ENCODE measurements at regions of chr19 and their contacts with region 1.

Region 1: DNA sequence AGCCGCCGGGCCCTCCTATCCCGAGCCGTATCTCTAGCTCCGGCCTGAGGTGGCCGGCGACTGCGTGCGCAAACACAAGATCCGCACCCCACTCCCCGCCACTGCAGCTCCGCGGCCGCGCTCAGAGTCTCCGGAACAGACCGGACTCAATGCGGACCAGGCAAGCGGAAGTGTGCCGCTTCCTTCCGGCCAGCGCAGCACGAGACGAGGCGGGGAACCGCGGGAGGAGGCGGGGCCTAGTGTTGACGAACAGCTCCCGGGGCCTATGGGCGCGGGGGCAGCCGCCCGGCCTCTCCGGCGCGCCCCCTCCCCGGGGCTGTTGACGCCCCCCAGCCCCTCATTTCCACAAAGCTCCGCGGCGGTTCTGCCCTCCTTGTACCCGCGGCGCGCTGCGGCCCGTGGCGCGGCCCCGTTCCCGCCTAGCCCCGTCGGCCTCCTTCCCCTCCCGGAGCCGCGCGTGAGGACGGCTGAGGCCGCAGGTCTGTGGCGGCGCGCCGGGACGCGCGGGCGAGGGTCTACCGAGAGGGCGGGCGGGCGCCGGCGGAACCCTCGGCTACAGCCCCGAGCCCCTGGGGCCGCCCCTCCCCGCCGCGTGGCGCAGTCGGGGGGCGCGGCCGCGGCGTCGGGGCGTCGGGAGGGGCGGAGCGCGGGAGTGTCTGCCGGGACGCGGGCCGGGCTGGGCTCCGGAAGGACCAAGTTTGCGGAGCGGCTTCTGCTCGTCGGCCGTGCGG is at the start of gene DPY19L3:
- DNase-seq: peak; percentile 94 to 97
- H3K4me3 ChIP-seq: peak within 1 kb of the TSS; percentile 93 to 97
- H3K27ac ChIP-seq: peak within 1 kb of the TSS; percentile 100
- H3K4me1 ChIP-seq: peaks cover 0 to 20% (median 12%) of the 10 kb centered on the region in 4 donors
- H3K27me3 ChIP-seq: no peaks in the 10 kb centered on the region
- CTCF ChIP-seq: peak in 1 of 2 experiments; percentile 2

Region 2: GRCh38 chr19:32166238-32166637 is 239.4 kb before region 1 on chr19:
- intact Hi-C with region 1: no loop called
- DNase-seq: no peak
- H3K4me3 ChIP-seq: no peak overlapping the region
- H3K27ac ChIP-seq: no peak overlapping the region
- H3K4me1 ChIP-seq: no peaks in the 10 kb centered on the region
- H3K27me3 ChIP-seq: peaks cover 0 to 9% of the 10 kb centered on the region in 2 donors
- CTCF ChIP-seq: no peak

Region 3: DNA sequence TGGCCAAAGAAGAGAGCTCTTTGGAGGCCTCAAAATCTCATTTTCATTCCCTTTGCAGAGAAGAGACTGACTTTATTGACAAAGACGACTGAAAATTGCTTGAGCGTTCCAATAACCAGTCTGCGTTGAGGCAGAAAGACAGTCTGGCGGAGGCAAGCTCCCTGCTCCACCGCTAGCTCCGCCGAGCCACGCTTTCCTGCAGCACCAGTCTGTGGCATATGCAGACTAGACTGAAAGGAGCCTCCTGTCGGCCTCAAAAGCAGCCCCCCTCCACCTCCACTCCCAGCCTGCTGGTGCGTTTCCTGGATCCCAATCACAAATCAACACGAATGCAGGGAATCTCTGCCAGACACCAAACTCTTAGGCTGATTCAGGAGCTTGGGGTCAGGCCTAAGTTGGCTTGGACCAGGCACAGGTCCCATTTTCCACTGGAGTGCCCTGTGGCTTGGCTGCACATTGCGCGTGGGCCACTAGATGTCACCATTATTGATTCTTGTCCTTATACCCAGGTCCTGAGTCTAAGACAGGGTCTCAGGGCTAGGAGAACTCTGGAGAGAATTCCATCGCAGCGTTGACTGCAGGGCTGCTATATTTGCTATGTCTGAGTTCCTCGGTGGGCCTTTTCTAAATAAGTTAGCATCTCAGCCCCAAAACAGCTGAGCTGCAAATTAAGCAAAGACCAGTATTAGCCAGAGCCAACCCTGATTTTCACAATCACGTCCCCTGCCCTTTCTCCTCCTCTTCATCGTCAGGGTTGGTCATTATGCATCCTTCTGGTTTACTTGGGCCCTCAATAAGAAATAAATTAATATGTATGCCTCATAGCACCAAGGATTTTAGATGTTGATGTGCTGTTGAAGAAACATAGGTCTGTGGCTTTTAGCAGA is 65.4 kb before region 1 on chr19:
- intact Hi-C with region 1: loop called (anchors 5 kb)
- DNase-seq: peak; percentile 69 to 86
- H3K4me3 ChIP-seq: no peak overlapping the region
- H3K27ac ChIP-seq: peak overlapping the region; percentile 5 to 37
- H3K4me1 ChIP-seq: peaks cover 0 to 21% (median 0%) of the 10 kb centered on the region in 4 donors
- H3K27me3 ChIP-seq: no peaks in the 10 kb centered on the region
- CTCF ChIP-seq: peak; percentile 63 to 77

Region 4: DNA sequence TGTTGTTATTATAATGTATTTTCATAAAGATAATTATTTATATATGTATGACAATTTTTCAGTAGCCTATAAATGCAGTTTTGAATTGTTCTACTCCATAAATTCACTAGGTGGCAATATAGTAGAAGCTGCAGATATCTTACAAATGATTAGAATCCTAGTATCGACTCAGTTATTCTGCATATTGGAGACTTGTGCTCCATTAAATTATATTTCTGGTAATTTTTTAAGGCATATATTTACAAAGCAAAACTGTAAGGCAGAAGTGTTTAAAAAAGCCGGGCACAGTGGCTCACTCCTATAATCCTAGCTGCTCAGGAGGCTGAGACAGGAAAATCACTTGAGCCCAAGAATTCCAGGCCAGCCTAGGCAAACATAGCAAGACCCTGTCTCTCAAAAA is 58.7 kb after region 1 on chr19:
- intact Hi-C with region 1: no loop called
- DNase-seq: no peak
- H3K4me3 ChIP-seq: no peak overlapping the region
- H3K27ac ChIP-seq: no peak overlapping the region
- H3K4me1 ChIP-seq: no peaks in the 10 kb centered on the region
- H3K27me3 ChIP-seq: no peaks in the 10 kb centered on the region
- CTCF ChIP-seq: no peak

Region 5: DNA sequence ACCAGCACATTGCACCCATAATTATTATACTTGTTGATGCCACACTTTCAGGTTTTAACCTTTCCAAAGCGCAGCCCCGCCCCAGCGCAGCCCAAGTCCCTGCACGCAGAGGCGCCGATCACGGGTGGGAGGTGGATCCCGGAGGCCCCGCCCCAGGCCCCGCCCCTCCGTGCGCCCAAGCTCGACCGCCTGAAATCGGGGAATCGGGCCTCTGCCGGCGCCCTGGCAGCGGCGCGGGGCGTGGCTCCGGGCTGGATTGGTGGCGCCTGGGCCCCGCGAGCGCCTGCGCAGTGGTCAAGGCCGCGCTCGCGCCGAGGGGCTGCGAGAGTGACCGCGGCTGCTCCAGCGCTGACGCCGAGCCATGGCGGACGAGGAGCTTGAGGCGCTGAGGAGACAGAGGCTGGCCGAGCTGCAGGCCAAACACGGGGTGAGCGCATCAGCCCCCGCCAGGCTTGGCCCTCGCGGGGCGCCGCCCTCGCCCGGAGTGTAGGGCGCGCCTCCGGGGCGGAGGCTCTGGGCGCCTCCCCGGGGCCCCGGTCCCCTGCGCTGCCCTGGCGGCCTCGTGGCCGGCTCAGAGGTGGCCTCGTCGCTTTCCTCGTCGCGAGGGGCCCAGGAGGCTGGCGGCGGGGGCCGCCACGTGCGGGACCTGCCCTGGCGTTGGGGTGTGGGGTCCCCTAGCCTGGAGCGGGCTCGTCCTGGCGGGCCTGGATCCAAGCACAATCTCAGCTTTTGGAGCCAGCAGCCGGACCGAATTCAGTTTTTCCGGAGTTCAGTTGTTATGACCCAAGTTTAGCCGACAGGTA is 175.5 kb after region 1 on chr19 and contains the start of gene PDCD5:
- intact Hi-C with region 1: loop called (anchors 10 kb)
- DNase-seq: peak; percentile 95 to 98
- H3K4me3 ChIP-seq: peak within 1 kb of the TSS; percentile 96 to 100
- H3K27ac ChIP-seq: peak within 1 kb of the TSS; percentile 90 to 91
- H3K4me1 ChIP-seq: peaks cover 0 to 13% (median 9%) of the 10 kb centered on the region in 4 donors
- H3K27me3 ChIP-seq: no peaks in the 10 kb centered on the region
- CTCF ChIP-seq: no peak

Region 6: DNA sequence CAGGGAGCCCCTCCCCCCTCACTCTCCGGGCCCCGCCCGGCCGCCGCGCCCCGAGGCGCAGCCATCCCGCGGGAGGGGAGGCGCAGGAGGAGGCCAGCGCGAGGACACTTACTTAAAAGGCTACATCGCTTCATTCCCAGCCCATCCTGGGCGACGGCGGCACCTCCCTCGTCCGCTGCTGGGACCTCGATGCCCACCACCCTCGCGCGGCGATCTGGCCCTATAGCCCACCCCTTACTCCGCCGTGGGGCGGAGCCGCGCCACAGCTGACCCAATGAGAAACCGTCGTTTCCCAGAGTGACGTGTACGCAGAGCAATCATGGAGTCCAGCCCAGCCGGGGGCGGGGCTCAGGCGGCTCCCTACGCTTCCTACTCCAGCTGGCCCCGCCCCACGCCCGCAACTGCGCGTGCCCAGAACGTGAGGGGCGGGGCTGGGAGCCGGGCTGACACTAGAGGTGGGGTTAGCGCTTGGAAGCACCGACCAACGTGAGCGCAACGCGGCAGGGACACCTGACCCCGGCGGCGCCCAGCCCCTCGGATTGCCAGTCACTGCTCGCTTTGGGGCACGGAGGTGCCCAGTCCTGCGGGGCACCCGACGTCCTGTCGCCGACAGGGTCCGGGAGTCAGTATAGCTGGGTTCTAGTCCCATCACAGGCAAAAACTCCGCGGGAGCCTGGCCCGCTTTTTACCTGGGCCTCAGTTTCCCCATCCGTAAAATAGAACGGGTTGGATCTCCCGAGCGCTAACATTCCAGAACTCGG is 269.5 kb after region 1 on chr19 and contains the start of gene ANKRD27:
- intact Hi-C with region 1: loop called (anchors 2 kb)
- DNase-seq: peak; percentile 98 to 99
- H3K4me3 ChIP-seq: peak within 1 kb of the TSS; percentile 81 to 82
- H3K27ac ChIP-seq: peak within 1 kb of the TSS; percentile 79 to 80
- H3K4me1 ChIP-seq: peaks cover 0 to 33% (median 25%) of the 10 kb centered on the region in 4 donors
- H3K27me3 ChIP-seq: peaks cover 0 to 31% of the 10 kb centered on the region in 2 donors
- CTCF ChIP-seq: no peak

Measured in tibial artery (tissue), 4 donors.